ENCODE measurements at regions of chr5 and their contacts with region 1.

Region 1: DNA sequence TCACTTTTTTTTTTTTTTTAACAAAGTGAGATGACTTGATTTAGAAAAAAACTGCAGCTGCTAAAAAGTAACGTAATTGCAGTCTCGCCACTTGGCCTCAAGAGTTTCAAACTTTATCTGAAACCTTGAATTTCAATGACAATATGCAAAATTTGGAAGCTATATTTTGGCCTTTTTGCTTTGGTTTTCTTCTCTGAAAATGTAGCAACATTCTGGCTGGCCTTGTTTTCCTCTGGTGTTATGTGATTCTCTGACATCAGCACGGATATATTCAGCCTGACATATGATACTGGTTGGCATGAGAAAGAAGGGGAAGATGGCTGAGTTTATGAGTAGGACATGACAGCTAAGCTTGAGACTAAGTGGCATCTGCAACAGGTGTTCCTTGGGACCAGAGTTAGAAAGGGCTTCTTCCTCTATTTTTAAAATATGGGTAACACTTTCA is 136.5 kb downstream of the MEF2C start:
- DNase-seq: no peak
- ATAC-seq: no peak
- H3K4me3 ChIP-seq: no peak overlapping the region
- H3K27ac ChIP-seq: no peak overlapping the region
- H3K4me1 ChIP-seq: peaks cover 8% of the 10 kb centered on the region; the same call in 1 of the 2 replicates
- H3K27me3 ChIP-seq: no peaks in the 10 kb centered on the region
- CTCF ChIP-seq: no peak

Region 2: GRCh38 chr5:88377705-88378656 is 368.5 kb before region 1 on chr5:
- CTCF ChIA-PET with region 1: no interaction called
- POLR2A ChIA-PET with region 1: no interaction called
- in situ Hi-C with region 1: no loop called
- intact Hi-C with region 1: no loop called
- DNase-seq: no peak
- ATAC-seq: no peak
- H3K4me3 ChIP-seq: no peak overlapping the region
- H3K27ac ChIP-seq: no peak overlapping the region
- H3K4me1 ChIP-seq: no peaks in the 10 kb centered on the region
- H3K27me3 ChIP-seq: no peaks in the 10 kb centered on the region
- CTCF ChIP-seq: no peak

Region 3: DNA sequence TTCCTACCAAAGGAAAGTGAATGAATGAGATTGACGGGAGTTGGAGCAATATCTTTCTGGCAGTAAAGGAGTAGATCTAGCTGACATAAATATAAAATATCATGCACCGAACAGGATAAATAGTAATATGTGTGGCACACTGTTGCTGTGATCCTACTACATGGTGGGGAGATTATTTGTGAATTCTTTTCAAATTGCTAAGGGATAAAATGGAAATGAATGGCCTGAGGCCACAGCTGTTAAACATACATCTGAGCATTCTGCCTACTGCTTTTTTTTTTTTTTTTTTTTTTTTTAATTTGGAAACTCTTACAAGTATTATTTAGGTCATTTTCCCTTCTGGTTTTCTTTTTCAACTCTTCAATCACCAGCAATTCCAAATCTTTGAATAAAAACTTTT is 69.7 kb after region 1 on chr5:
- CTCF ChIA-PET with region 1: no interaction called
- POLR2A ChIA-PET with region 1: interaction called, 14 read pairs
- in situ Hi-C with region 1: no loop called
- intact Hi-C with region 1: no loop called
- DNase-seq: no peak
- ATAC-seq: no peak
- H3K4me3 ChIP-seq: no peak overlapping the region
- H3K27ac ChIP-seq: no peak overlapping the region
- H3K4me1 ChIP-seq: no peaks in the 10 kb centered on the region
- H3K27me3 ChIP-seq: no peaks in the 10 kb centered on the region
- CTCF ChIP-seq: no peak

Measured in Panc1 (cell line).